Activated B cell treated with CpG ODN at 0.5 μM for 24 hours (primary cell): ENCODE measurements at regions of chr15 and their contacts with region 1.

Region 1: GRCh38 chr15:44414001-44414400 is 13.4 kb upstream of the CTDSPL2 start:
- DNase-seq: no peak
- ATAC-seq: no peak
- H3K4me3 Mint-ChIP-seq: no peak overlapping the region
- H3K27ac Mint-ChIP-seq: no peak overlapping the region
- H3K4me1 Mint-ChIP-seq: no peaks in the 10 kb centered on the region
- H3K27me3 Mint-ChIP-seq: no peaks in the 10 kb centered on the region
- CTCF ChIP-seq: no peak

Region 2: GRCh38 chr15:44215594-44215993 is 198.4 kb before region 1 on chr15:
- CTCF ChIA-PET with region 1: no interaction called
- POLR2A ChIA-PET with region 1: no interaction called
- intact Hi-C with region 1: no loop called
- DNase-seq: no peak
- ATAC-seq: no peak
- H3K4me3 Mint-ChIP-seq: no peak overlapping the region
- H3K27ac Mint-ChIP-seq: no peak overlapping the region
- H3K4me1 Mint-ChIP-seq: peaks cover 2% of the 10 kb centered on the region
- H3K27me3 Mint-ChIP-seq: peaks cover 25% of the 10 kb centered on the region
- CTCF ChIP-seq: no peak

Region 3: DNA sequence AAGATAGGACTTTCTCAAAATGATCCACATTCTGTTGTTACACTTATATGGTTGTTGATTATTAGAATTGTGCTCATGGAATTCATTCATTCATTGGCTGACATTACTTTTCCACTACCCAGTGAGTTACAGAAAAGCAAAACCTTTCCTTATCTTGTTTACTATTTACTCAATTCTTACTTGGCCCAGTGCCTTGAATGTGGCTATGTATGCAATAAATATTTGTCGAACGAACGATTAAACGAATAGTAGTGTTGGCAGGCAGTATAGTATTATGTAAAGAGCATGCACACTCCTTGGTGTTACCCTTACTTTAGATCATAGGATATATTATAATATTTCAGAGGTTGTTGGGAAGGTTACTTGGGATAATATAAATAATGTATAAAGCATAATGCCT is 44.4 kb after region 1 on chr15:
- CTCF ChIA-PET with region 1: no interaction called
- POLR2A ChIA-PET with region 1: no interaction called
- intact Hi-C with region 1: no loop called
- DNase-seq: no peak
- ATAC-seq: no peak
- H3K4me3 Mint-ChIP-seq: no peak overlapping the region
- H3K27ac Mint-ChIP-seq: no peak overlapping the region
- H3K4me1 Mint-ChIP-seq: peaks cover 14% of the 10 kb centered on the region
- H3K27me3 Mint-ChIP-seq: no peaks in the 10 kb centered on the region
- CTCF ChIP-seq: no peak

Region 4: DNA sequence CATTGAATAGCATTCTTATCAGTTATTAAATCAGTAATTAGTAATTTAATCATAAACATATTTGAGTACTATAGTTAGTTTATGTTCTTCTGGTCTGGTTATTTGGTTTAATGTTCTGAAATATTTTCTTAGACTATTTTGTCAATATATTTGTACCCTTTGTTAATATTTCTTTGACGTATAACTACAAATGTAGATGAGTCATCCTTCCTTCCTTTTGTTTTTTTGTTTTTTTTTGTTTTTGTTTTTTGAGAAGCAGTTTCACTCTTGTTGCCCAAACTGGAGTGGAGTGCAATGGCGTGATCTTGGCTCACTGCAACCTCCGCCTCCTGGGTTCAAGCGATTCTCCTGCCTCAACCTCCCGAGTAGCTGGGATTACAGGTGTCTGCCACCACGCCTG is 105.5 kb after region 1 on chr15:
- CTCF ChIA-PET with region 1: no interaction called
- POLR2A ChIA-PET with region 1: interaction called, 12 read pairs
- intact Hi-C with region 1: no loop called
- DNase-seq: no peak
- ATAC-seq: no peak
- H3K4me3 Mint-ChIP-seq: no peak overlapping the region
- H3K27ac Mint-ChIP-seq: no peak overlapping the region
- H3K4me1 Mint-ChIP-seq: no peaks in the 10 kb centered on the region
- H3K27me3 Mint-ChIP-seq: no peaks in the 10 kb centered on the region
- CTCF ChIP-seq: no peak